ENCODE measurements at regions of chr5 and their contacts with region 1.

Region 1: GRCh38 chr5:169583424-169584204 is at the start of gene SPDL1:
- DNase-seq: peak; percentile 97
- H3K4me3 Mint-ChIP-seq: peak within 1 kb of the TSS; percentile 98
- H3K27ac Mint-ChIP-seq: peak within 1 kb of the TSS; percentile 84
- H3K4me1 Mint-ChIP-seq: peaks cover 31% of the 10 kb centered on the region
- H3K27me3 Mint-ChIP-seq: no peaks in the 10 kb centered on the region
- total RNA-seq, gene SPDL1: 32.7 to 34.9 TPM

Region 2: DNA sequence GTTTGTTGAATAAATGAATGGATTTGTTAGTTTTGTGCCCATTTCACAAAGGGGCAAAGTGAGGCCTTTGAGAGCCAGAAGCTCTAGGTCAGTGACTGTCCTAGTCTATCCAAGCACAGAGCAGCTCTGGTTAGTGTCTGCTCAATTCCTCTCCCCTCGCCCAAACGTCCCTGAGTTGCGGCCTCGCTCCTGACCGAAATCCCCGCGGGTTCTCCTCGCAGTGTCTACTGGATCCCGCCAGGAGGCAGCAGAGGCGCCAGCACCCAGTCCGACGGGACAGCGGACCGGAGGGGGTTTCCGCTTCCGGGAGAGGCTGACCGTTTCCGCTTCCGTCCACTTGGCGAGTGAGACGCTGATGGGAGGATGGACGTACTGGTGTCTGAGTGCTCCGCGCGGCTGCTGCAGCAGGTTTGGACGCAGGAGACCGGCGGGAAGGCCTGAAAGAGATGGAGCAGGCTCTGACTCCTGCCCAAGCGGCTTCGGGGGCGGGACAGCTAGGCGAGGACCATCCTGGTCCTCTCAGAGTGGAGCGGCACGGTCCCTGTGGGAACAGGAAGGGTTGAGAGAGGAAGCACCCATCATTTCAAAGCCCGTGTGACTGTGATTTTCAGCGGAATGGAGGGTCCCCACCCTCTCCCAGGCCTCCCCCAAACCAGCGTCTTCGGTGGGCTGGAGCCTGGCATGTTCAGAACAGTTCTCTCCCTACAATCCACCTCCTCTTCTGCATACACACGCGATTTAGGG is 1097.3 kb before region 1 on chr5 and contains the start of gene RARS1:
- CTCF ChIA-PET with region 1: interaction called, 3 read pairs
- POLR2A ChIA-PET with region 1: no interaction called
- intact Hi-C with region 1: loop called (anchors 1 kb)
- DNase-seq: peak; percentile 96
- H3K4me3 Mint-ChIP-seq: peak within 1 kb of the TSS; percentile 99
- H3K27ac Mint-ChIP-seq: peak within 1 kb of the TSS; percentile 89
- H3K4me1 Mint-ChIP-seq: peaks cover 37% of the 10 kb centered on the region
- H3K27me3 Mint-ChIP-seq: no peaks in the 10 kb centered on the region
- total RNA-seq, gene RARS1: 98.6 to 101 TPM

Region 3: GRCh38 chr5:168947212-168947868 is 636.3 kb before region 1 on chr5:
- CTCF ChIA-PET with region 1: interaction called, 4 read pairs
- POLR2A ChIA-PET with region 1: no interaction called
- intact Hi-C with region 1: loop called (anchors 2 kb)
- DNase-seq: peak; percentile 57
- H3K4me3 Mint-ChIP-seq: no peak overlapping the region
- H3K27ac Mint-ChIP-seq: no peak overlapping the region
- H3K4me1 Mint-ChIP-seq: peaks cover 13% of the 10 kb centered on the region
- H3K27me3 Mint-ChIP-seq: no peaks in the 10 kb centered on the region

Region 4: DNA sequence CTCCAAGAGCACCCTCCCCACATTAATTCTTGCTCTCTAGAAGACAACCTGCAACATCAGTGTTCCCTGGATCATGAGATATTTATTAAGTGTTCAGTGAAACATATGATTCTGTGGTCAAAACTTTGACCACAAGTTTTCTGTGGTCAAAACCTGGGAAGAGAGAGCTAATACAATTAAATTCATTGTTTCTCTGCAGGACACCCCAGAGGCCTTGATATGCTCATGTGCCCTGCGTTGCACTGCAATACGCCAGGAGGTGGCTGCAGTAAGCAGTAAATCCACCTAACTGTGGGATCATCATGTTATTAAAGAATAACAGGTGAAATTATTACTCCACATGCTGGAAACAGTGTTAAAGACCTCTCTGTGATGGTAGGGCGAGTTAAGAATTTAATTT is 109.4 kb before region 1 on chr5:
- CTCF ChIA-PET with region 1: interaction called, 3 read pairs
- POLR2A ChIA-PET with region 1: no interaction called
- intact Hi-C with region 1: loop called (anchors 5 kb)
- DNase-seq: no peak
- H3K4me3 Mint-ChIP-seq: no peak overlapping the region
- H3K27ac Mint-ChIP-seq: no peak overlapping the region
- H3K4me1 Mint-ChIP-seq: no peaks in the 10 kb centered on the region
- H3K27me3 Mint-ChIP-seq: peaks cover 3% of the 10 kb centered on the region

Region 5: GRCh38 chr5:169701910-169702451 is 118.4 kb after region 1 on chr5:
- CTCF ChIA-PET with region 1: no interaction called
- POLR2A ChIA-PET with region 1: no interaction called
- intact Hi-C with region 1: loop called (anchors 1 kb)
- DNase-seq: no peak
- H3K4me3 Mint-ChIP-seq: no peak overlapping the region
- H3K27ac Mint-ChIP-seq: peak overlapping the region; percentile 60
- H3K4me1 Mint-ChIP-seq: peaks cover 41% of the 10 kb centered on the region
- H3K27me3 Mint-ChIP-seq: no peaks in the 10 kb centered on the region